ENCODE measurements at regions of chr10 and their contacts with region 1.

Region 1: GRCh38 chr10:123582084-123582989 is 83.8 kb upstream of the GPR26 start:
- DNase-seq: peak; percentile 28 to 71 (median 57)
- ATAC-seq: peak; percentile 46
- H3K4me3 ChIP-seq: no peak overlapping the region
- H3K4me3 Mint-ChIP-seq: no peak overlapping the region
- H3K27ac ChIP-seq: no peak overlapping the region
- H3K27ac Mint-ChIP-seq: no peak overlapping the region
- H3K4me1 ChIP-seq: no peaks in the 10 kb centered on the region
- H3K4me1 Mint-ChIP-seq: peaks cover 1% of the 10 kb centered on the region
- H3K27me3 ChIP-seq: no peaks in the 10 kb centered on the region
- H3K27me3 Mint-ChIP-seq: peaks cover 31% of the 10 kb centered on the region
- CTCF ChIP-seq: peak; percentile 59

Region 2: DNA sequence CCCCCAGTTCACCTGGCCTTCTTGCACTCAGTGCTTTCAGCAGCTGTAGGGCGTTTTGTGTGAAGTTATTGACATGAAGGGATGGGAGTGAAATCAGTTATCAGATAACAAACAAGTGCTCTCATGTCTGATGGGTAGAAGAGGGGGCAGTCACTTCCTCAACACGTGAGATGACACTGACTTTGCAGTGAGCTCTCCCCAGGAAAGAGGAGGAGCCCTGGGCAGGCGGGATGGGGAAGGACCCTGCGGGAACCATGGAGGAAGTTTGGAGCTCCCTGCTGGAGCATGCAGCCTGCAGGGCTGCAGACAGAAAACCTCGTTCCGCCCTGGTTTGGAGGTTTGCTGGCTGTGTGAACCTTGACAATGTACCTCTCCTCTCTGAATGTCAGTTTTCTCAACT is 122.5 kb after region 1 on chr10:
- CTCF ChIA-PET with region 1: no interaction called
- POLR2A ChIA-PET with region 1: no interaction called
- intact Hi-C with region 1: no loop called
- DNase-seq: no peak
- ATAC-seq: no peak
- H3K4me3 ChIP-seq: no peak overlapping the region
- H3K4me3 Mint-ChIP-seq: no peak overlapping the region
- H3K27ac ChIP-seq: no peak overlapping the region
- H3K27ac Mint-ChIP-seq: no peak overlapping the region
- H3K4me1 ChIP-seq: no peaks in the 10 kb centered on the region
- H3K4me1 Mint-ChIP-seq: no peaks in the 10 kb centered on the region
- H3K27me3 ChIP-seq: no peaks in the 10 kb centered on the region
- H3K27me3 Mint-ChIP-seq: peaks cover 2% of the 10 kb centered on the region
- CTCF ChIP-seq: no peak

Region 3: GRCh38 chr10:123967396-123968243 is 385.3 kb after region 1 on chr10:
- CTCF ChIA-PET with region 1: no interaction called
- POLR2A ChIA-PET with region 1: no interaction called
- intact Hi-C with region 1: loop called (anchors 1 to 5 kb)
- DNase-seq: peak in 6 of 9 experiments; percentile 11 to 58 (median 42)
- ATAC-seq: no peak
- H3K4me3 ChIP-seq: no peak overlapping the region
- H3K4me3 Mint-ChIP-seq: no peak overlapping the region
- H3K27ac ChIP-seq: no peak overlapping the region
- H3K27ac Mint-ChIP-seq: no peak overlapping the region
- H3K4me1 ChIP-seq: no peaks in the 10 kb centered on the region
- H3K4me1 Mint-ChIP-seq: peaks cover 2% of the 10 kb centered on the region
- H3K27me3 ChIP-seq: peaks cover 12 to 21% of the 10 kb centered on the region in 2 experiments
- H3K27me3 Mint-ChIP-seq: peaks cover 67% of the 10 kb centered on the region
- CTCF ChIP-seq: peak; percentile 24

Measured in CD8-positive, alpha-beta T cell (primary cell).